CD8-positive, alpha-beta T cell (primary cell): ENCODE measurements at regions of chr20 and their contacts with region 1.

Region 1: GRCh38 chr20:47379433-47380150 is 23.1 kb upstream of the ZMYND8 start:
- DNase-seq: no peak
- ATAC-seq: no peak
- H3K4me3 ChIP-seq: no peak overlapping the region
- H3K4me3 Mint-ChIP-seq: no peak overlapping the region
- H3K27ac ChIP-seq: no peak overlapping the region
- H3K27ac Mint-ChIP-seq: no peak overlapping the region
- H3K4me1 ChIP-seq: peaks cover 10% of the 10 kb centered on the region
- H3K4me1 Mint-ChIP-seq: peaks cover 10% of the 10 kb centered on the region
- H3K27me3 ChIP-seq: no peaks in the 10 kb centered on the region
- H3K27me3 Mint-ChIP-seq: no peaks in the 10 kb centered on the region
- CTCF ChIP-seq: no peak

Region 2: DNA sequence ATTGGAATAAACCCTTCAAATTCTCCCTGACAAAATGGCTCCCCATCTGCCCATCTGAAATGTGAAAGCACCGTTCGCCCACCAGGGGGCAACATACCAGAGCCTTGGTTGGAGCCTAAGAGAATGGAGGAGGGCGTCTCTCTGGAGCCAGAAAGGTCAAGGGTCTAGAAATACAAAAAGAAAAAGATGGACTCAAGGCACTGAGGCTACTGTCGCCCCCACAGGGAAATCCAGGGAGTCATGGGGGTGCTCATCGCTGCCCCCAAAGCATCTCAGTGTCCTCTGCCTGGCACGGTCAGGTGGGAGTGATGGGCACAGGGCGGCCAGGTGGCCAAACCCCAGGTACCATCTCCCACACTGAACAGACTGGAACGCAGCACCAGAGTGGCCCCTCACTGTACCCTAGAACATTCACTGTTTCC is 159.4 kb before region 1 on chr20:
- CTCF ChIA-PET with region 1: interaction called, 44 read pairs
- POLR2A ChIA-PET with region 1: no interaction called
- intact Hi-C with region 1: no loop called
- DNase-seq: peak; percentile 7 to 60 (median 46)
- ATAC-seq: peak; percentile 36
- H3K4me3 ChIP-seq: no peak overlapping the region
- H3K4me3 Mint-ChIP-seq: no peak overlapping the region
- H3K27ac ChIP-seq: no peak overlapping the region
- H3K27ac Mint-ChIP-seq: peak overlapping the region; percentile 70
- H3K4me1 ChIP-seq: no peaks in the 10 kb centered on the region
- H3K4me1 Mint-ChIP-seq: peaks cover 2% of the 10 kb centered on the region
- H3K27me3 ChIP-seq: no peaks in the 10 kb centered on the region
- H3K27me3 Mint-ChIP-seq: no peaks in the 10 kb centered on the region
- CTCF ChIP-seq: peak; percentile 66

Region 3: DNA sequence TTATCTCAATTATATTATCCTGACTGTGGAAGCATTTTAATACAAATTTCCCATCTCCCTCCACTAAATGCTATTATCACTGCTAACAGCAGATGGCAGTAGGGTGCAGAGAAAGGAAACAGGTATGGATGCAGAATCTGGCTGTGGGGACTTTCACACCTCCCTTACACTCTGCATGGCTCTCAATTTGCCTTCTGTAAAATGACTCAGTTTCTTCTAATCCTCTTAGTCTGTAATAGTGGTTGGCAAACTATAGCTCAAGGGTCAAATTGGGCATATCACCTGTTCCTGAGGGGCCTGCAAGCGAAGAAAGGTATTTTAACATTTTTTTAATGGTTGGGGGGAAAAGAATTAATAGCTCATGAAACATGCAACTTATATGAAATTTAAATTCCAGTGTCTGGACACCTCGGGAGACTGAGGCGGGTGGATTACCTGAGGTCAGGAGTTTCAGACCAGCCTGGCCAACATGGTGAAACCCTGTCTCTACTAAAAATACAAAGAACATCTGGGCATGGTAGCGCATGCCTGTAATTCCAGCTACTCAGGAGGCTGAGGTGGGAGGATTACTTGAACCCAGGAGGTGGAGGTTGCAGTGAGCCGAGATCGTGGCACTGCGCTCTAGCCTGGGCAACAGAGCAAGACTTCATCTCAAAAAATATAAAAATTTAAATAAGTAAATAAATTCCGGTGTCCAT is 106.5 kb before region 1 on chr20:
- CTCF ChIA-PET with region 1: interaction called, 661 read pairs
- POLR2A ChIA-PET with region 1: interaction called, 19 read pairs
- intact Hi-C with region 1: loop called (anchors 1 kb)
- DNase-seq: peak in 8 of 9 experiments; percentile 1 to 77 (median 46)
- ATAC-seq: peak; percentile 85
- H3K4me3 ChIP-seq: no peak overlapping the region
- H3K4me3 Mint-ChIP-seq: no peak overlapping the region
- H3K27ac ChIP-seq: no peak overlapping the region
- H3K27ac Mint-ChIP-seq: peak overlapping the region; percentile 66
- H3K4me1 ChIP-seq: no peaks in the 10 kb centered on the region
- H3K4me1 Mint-ChIP-seq: peaks cover 12% of the 10 kb centered on the region
- H3K27me3 ChIP-seq: no peaks in the 10 kb centered on the region
- H3K27me3 Mint-ChIP-seq: no peaks in the 10 kb centered on the region
- CTCF ChIP-seq: peak; percentile 93

Region 4: GRCh38 chr20:47317127-47317895 is 62.3 kb before region 1 on chr20:
- CTCF ChIA-PET with region 1: interaction called, 27 read pairs
- POLR2A ChIA-PET with region 1: no interaction called
- intact Hi-C with region 1: no loop called
- DNase-seq: peak in 8 of 9 experiments; percentile 33 to 63 (median 50)
- ATAC-seq: peak; percentile 77
- H3K4me3 ChIP-seq: no peak overlapping the region
- H3K4me3 Mint-ChIP-seq: no peak overlapping the region
- H3K27ac ChIP-seq: peak overlapping the region in 1 of 2 experiments; percentile 54
- H3K27ac Mint-ChIP-seq: peak overlapping the region; percentile 78
- H3K4me1 ChIP-seq: peaks cover 43% of the 10 kb centered on the region
- H3K4me1 Mint-ChIP-seq: peaks cover 67% of the 10 kb centered on the region
- H3K27me3 ChIP-seq: no peaks in the 10 kb centered on the region
- H3K27me3 Mint-ChIP-seq: no peaks in the 10 kb centered on the region
- CTCF ChIP-seq: no peak

Region 5: GRCh38 chr20:47365023-47365764 is 14.4 kb before region 1 on chr20:
- CTCF ChIA-PET with region 1: interaction called, 64 read pairs
- POLR2A ChIA-PET with region 1: interaction called, 3 read pairs
- intact Hi-C with region 1: no loop called
- DNase-seq: no peak
- ATAC-seq: peak; percentile 51
- H3K4me3 ChIP-seq: no peak overlapping the region
- H3K4me3 Mint-ChIP-seq: peak overlapping the region; percentile 39
- H3K27ac ChIP-seq: no peak overlapping the region
- H3K27ac Mint-ChIP-seq: no peak overlapping the region
- H3K4me1 ChIP-seq: peaks cover 8% of the 10 kb centered on the region
- H3K4me1 Mint-ChIP-seq: peaks cover 18% of the 10 kb centered on the region
- H3K27me3 ChIP-seq: no peaks in the 10 kb centered on the region
- H3K27me3 Mint-ChIP-seq: no peaks in the 10 kb centered on the region
- CTCF ChIP-seq: no peak

Region 6: GRCh38 chr20:47501483-47502270 is 122.1 kb after region 1 on chr20 and contains the start of gene NCOA3:
- CTCF ChIA-PET with region 1: interaction called, 24 read pairs
- POLR2A ChIA-PET with region 1: no interaction called
- intact Hi-C with region 1: no loop called
- DNase-seq: peak; percentile 73 to 92 (median 90)
- ATAC-seq: peak; percentile 80
- H3K4me3 ChIP-seq: peak within 1 kb of the TSS; percentile 60 to 91
- H3K4me3 Mint-ChIP-seq: peak within 1 kb of the TSS; percentile 97
- H3K27ac ChIP-seq: peak within 1 kb of the TSS; percentile 49 to 71
- H3K27ac Mint-ChIP-seq: peak within 1 kb of the TSS; percentile 98
- H3K4me1 ChIP-seq: peaks cover 24% of the 10 kb centered on the region
- H3K4me1 Mint-ChIP-seq: peaks cover 37% of the 10 kb centered on the region
- H3K27me3 ChIP-seq: no peaks in the 10 kb centered on the region
- H3K27me3 Mint-ChIP-seq: no peaks in the 10 kb centered on the region
- CTCF ChIP-seq: peak; percentile 34
- total RNA-seq, gene NCOA3: 45.1 to 47.1 TPM